PC-9 (cell line): ENCODE measurements at regions of chr22 and their contacts with region 1.

Region 1: GRCh38 chr22:39244496-39245129 is at the start of gene PDGFB:
- DNase-seq: peak; percentile 61 to 71
- H3K4me3 ChIP-seq: peak within 1 kb of the TSS; percentile 98
- H3K27ac ChIP-seq: 0 out of 2 replicates have a peak within 1 kb of the TSS, but pooled peaks have one; percentile 18
- H3K4me1 ChIP-seq: peaks cover 28% of the 10 kb centered on the region
- H3K27me3 ChIP-seq: no peaks in the 10 kb centered on the region
- CTCF ChIP-seq: 0 out of 2 replicates have a peak, but pooled peaks have one; percentile 9
- total RNA-seq, gene PDGFB: 35.5 and 39.7 TPM in 2 replicates

Region 2: GRCh38 chr22:38989466-38989865 is 255.1 kb before region 1 on chr22:
- CTCF ChIA-PET with region 1: no interaction called
- POLR2A ChIA-PET with region 1: no interaction called
- intact Hi-C with region 1: no loop called
- DNase-seq: no peak
- H3K4me3 ChIP-seq: no peak overlapping the region
- H3K27ac ChIP-seq: no peak overlapping the region
- H3K4me1 ChIP-seq: peaks cover 18% of the 10 kb centered on the region
- H3K27me3 ChIP-seq: no peaks in the 10 kb centered on the region
- CTCF ChIP-seq: no peak

Region 3: GRCh38 chr22:39152511-39153219 is 91.9 kb before region 1 on chr22 and contains the start of gene CBX7:
- CTCF ChIA-PET with region 1: interaction called, 11 read pairs
- POLR2A ChIA-PET with region 1: interaction called, 6 read pairs
- intact Hi-C with region 1: no loop called
- DNase-seq: peak; percentile 79 to 94
- H3K4me3 ChIP-seq: peak within 1 kb of the TSS; percentile 77
- H3K27ac ChIP-seq: no peak within 1 kb of the TSS
- H3K4me1 ChIP-seq: peaks cover 16% of the 10 kb centered on the region
- H3K27me3 ChIP-seq: no peaks in the 10 kb centered on the region
- CTCF ChIP-seq: no peak
- total RNA-seq, gene CBX7: 28.2 and 29.1 TPM in 2 replicates